A673 (cell line): ENCODE measurements at regions of chr14 and their contacts with region 1.

Region 1: GRCh38 chr14:67695394-67695949 is at the start of gene RDH11:
- DNase-seq: peak; percentile 97
- H3K4me3 ChIP-seq: peak within 1 kb of the TSS; percentile 77
- H3K27ac ChIP-seq: peak within 1 kb of the TSS; percentile 81
- H3K4me1 ChIP-seq: peaks cover 20% of the 10 kb centered on the region
- H3K27me3 ChIP-seq: no peaks in the 10 kb centered on the region
- CTCF ChIP-seq: no peak
- total RNA-seq, gene RDH11: 95.3 and 107 TPM in 2 replicates

Region 2: DNA sequence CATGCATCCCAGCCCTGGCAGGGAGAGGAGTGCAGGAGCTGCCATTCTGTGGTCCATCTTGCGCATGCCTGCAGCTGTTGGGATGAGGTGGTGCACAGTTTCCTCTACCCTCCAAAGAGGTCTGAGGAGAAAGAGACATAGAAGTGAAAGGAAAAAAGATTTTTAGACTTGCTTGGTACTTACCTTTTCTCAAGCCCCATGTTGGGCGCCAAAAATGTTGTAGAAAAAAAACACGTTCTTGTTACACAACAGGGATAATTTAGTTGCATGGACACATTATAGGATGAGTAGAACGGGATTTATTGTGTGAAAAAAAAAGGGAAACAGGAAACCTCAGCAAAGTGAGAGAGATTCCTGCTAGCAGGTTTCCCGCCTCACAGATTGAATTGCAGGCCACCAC is 750.6 kb before region 1 on chr14:
- CTCF ChIA-PET with region 1: no interaction called
- POLR2A ChIA-PET with region 1: no interaction called
- intact Hi-C with region 1: no loop called
- DNase-seq: peak; percentile 42
- H3K4me3 ChIP-seq: no peak overlapping the region
- H3K27ac ChIP-seq: no peak overlapping the region
- H3K4me1 ChIP-seq: no peaks in the 10 kb centered on the region
- H3K27me3 ChIP-seq: no peaks in the 10 kb centered on the region
- CTCF ChIP-seq: no peak

Region 3: DNA sequence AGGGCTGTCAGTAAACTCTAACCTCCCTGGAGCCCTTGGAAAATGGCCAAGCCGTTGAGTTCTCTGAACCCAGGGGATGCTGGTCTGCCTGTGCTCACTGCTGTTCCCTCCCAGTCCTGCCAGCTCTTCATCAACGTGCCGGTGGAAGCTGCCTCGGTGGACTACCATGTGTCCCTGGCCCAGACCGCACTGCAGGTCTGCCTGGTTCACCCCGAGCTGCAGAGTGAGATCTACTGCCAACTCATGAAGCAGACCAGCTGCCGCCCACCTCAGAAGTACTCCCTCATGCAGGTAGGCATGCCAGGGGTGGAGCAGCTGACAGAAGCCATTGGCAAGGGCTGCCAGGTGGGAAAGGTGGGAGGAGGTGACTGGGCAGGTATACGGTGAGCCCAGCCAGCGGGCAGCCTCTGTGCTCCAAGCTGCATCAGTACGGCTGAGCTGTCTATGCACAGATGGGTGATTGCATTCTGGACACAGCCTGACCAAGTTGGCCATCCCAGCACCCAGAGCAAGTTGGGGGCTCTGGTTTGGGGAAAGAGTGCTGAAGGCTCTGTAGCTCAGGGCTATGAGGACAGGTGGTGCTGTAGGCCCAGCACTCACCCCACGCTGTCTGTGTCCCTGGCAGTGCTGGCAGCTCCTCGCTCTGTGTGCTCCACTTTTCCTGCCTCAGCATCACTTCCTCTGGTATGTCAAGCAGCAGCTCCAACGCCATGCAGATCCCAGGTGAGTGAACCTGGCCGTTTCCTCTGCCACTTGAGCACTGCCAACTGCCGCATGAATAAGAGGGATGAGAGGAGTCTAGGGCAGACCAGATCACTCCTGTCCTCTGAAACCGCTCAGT is 117.3 kb before region 1 on chr14:
- CTCF ChIA-PET with region 1: interaction called, 11 read pairs
- POLR2A ChIA-PET with region 1: no interaction called
- intact Hi-C with region 1: no loop called
- DNase-seq: no peak
- H3K4me3 ChIP-seq: no peak overlapping the region
- H3K27ac ChIP-seq: no peak overlapping the region
- H3K4me1 ChIP-seq: no peaks in the 10 kb centered on the region
- H3K27me3 ChIP-seq: no peaks in the 10 kb centered on the region
- CTCF ChIP-seq: no peak

Region 4: DNA sequence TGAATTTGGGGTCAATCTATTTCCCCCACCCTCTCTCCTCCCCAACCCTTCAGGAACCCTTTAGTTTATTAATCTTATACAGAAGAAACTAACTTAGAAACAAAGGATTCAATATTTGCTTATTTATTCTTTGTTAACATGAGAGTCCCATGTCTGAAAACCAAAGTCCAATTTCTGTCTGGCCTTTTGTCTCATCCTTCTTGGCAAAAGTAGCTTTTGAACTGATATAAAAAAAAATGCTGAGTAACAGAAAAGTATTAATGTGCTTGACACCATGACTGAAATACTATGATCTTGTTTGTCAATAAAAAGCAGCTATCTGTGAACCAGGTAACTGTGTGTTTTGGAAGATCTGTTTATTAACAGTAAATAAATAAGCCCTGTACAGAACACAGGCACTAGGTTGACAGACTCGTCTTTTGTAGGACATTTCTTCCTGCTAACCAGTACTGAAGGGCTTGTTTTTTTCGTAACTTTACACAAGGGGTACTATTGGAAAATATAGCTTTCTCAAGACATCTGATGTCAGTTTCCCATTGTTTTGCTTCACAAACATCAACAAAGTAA is 106.2 kb before region 1 on chr14:
- CTCF ChIA-PET with region 1: no interaction called
- POLR2A ChIA-PET with region 1: no interaction called
- intact Hi-C with region 1: no loop called
- DNase-seq: no peak
- H3K4me3 ChIP-seq: no peak overlapping the region
- H3K27ac ChIP-seq: no peak overlapping the region
- H3K4me1 ChIP-seq: no peaks in the 10 kb centered on the region
- H3K27me3 ChIP-seq: no peaks in the 10 kb centered on the region
- CTCF ChIP-seq: no peak

Region 5: DNA sequence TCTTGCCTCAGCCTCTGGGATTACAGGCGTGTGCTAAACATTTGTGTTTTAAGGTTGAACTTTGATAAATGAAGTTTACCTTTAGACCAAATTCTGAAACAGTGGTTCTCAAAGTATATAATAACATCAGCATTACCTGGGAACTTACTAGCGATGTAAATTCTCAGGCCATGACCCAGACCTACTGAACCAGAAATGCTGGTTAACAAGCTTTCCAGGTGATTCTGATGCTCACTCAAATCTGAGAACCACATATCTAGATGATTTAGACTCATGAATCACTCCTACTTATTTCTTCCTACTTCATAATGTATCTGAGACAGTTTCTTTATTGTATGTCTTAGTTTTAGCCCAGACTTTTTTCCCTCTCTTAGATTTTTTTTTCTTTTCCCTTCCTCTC is 167.8 kb after region 1 on chr14:
- CTCF ChIA-PET with region 1: no interaction called
- POLR2A ChIA-PET with region 1: no interaction called
- intact Hi-C with region 1: no loop called
- DNase-seq: no peak
- H3K4me3 ChIP-seq: no peak overlapping the region
- H3K27ac ChIP-seq: no peak overlapping the region
- H3K4me1 ChIP-seq: no peaks in the 10 kb centered on the region
- H3K27me3 ChIP-seq: no peaks in the 10 kb centered on the region
- CTCF ChIP-seq: no peak